K562 (cell line): ENCODE measurements at regions of chr3 and their contacts with region 1.

Region 1: DNA sequence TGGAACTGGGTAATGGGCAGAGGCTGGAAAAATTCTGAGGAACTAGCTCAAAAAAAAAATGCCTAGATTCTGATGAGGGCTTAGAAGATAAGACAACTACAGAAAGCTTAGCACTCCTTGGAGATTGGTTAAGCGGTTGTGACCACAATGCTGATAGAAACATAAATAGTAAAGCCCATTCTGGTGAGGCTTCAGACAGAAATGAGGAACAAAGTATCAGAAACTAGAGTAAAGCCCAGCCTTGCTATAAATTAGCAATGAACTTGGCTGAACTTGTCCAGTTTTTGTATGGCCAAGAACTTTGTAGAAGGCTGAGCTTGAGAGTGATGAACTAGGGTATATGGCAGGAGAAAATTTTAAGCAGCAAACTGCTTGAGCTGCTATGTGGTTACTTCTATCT is 25.4 kb downstream of the GOLGB1 start:
- DNase-seq: peak in 1 of 4 experiments; percentile 4
- ATAC-seq: no peak
- H3K4me3 ChIP-seq: no peak overlapping the region
- H3K27ac ChIP-seq: no peak overlapping the region
- H3K4me1 ChIP-seq: no peaks in the 10 kb centered on the region; a peak in 1 of 5 replicates
- H3K27me3 ChIP-seq: no peaks in the 10 kb centered on the region
- CTCF ChIP-seq: no peak
- EP300 ChIP-seq: no peak
- POLR2A ChIP-seq: no peak
- RAD21 ChIP-seq: no peak

Region 2: DNA sequence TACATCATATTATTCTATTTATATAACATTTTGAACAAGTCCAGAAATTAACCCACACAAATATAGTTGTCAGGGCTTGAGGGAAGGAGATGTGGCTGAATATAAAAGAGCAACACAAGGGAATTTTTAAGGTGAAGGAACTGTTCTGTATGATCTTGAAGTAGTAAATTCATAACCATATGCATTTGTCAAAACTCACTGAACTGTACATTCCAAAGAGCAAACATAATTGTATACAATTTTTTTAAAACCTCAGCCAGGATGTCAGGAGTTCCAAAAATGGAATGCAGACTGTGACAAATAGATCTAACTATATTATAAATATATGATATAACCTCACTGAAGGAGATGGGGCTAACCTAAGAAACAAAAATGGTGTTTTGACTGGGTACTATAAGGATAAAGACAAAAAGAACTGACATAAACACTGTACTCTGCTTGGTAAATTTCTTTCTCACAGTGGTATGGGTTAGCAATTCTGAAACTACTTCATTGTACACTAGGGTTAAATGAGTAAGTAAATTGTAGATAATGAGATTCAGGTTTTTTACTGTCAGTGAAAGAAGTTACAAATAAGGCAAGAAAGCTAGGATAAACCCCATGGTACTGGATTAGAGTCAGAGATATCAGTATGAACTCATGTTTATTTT is 11.0 kb after region 1 on chr3:
- CTCF ChIA-PET with region 1: no interaction called
- POLR2A ChIA-PET with region 1: interaction called, 12 read pairs
- in situ Hi-C with region 1: no loop called
- intact Hi-C with region 1: no loop called
- DNase-seq: no peak
- ATAC-seq: no peak
- H3K4me3 ChIP-seq: no peak overlapping the region
- H3K27ac ChIP-seq: no peak overlapping the region
- H3K4me1 ChIP-seq: no peaks in the 10 kb centered on the region
- H3K27me3 ChIP-seq: no peaks in the 10 kb centered on the region
- CTCF ChIP-seq: no peak
- EP300 ChIP-seq: no peak
- POLR2A ChIP-seq: no peak
- RAD21 ChIP-seq: no peak